ENCODE measurements at regions of chr11 and their contacts with region 1.

Region 1: GRCh38 chr11:66677599-66678375 is at the start of gene RBM4B:
- DNase-seq: peak; percentile 97
- ATAC-seq: peak; percentile 90
- H3K4me3 Mint-ChIP-seq: peak within 1 kb of the TSS; percentile 85
- H3K27ac Mint-ChIP-seq: peak within 1 kb of the TSS; percentile 94
- H3K4me1 Mint-ChIP-seq: peaks cover 27% of the 10 kb centered on the region
- H3K27me3 Mint-ChIP-seq: no peaks in the 10 kb centered on the region
- total RNA-seq, gene RBM4B: 14.7 to 14.8 TPM

Region 2: DNA sequence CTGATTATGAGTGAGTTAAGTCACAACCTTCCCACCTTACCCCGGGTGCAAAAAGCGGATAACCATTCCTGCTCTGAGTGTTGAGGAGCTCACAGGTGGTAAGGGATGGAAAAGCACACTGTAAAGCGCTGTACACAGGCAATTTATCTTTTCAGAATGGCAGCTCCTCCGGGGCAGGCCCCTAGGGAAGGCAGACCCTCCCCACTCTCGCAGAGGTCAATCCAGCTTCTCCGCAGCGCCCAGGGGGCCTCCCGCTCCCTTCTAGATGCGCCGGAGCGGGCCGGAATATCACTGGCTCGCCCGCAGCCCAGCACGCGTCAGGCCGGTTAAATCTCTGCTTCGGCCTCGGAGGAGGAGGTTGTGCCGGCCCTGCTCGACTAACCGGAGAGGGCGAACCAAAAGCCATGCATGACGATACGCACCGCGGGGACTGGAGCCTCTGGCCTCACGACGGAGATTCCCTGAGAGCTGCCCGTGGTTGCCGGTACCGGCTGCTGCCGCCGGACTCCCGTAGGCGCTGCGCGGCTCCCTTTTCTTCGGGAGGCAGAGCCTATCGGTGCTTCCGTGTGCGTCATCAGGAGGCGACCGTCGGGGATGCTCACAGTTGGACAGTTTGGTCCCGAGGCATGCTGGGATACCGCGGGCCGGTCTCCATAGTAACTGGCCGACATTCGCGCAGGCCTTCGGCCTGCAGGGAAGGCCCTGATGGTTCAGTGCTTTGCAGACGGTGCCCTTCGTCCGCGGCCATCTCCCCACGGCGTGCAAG is 333.1 kb before region 1 on chr11 and contains the start of gene BRMS1:
- CTCF ChIA-PET with region 1: no interaction called
- POLR2A ChIA-PET with region 1: no interaction called
- intact Hi-C with region 1: loop called in 1 of 2 experiments (anchors 5 kb)
- DNase-seq: peak; percentile 98
- ATAC-seq: peak; percentile 80
- H3K4me3 Mint-ChIP-seq: peak within 1 kb of the TSS; percentile 93
- H3K27ac Mint-ChIP-seq: peak within 1 kb of the TSS; percentile 90
- H3K4me1 Mint-ChIP-seq: peaks cover 45% of the 10 kb centered on the region
- H3K27me3 Mint-ChIP-seq: peaks cover 3% of the 10 kb centered on the region
- total RNA-seq, gene BRMS1: 29.2 to 30.2 TPM

Region 3: GRCh38 chr11:66438504-66439466 is 239.0 kb before region 1 on chr11 and contains the start of gene MRPL11:
- CTCF ChIA-PET with region 1: interaction called, 10 read pairs
- POLR2A ChIA-PET with region 1: interaction called, 4 read pairs
- intact Hi-C with region 1: loop called (anchors 1 to 10 kb)
- DNase-seq: peak; percentile 94
- ATAC-seq: peak; percentile 99
- H3K4me3 Mint-ChIP-seq: peak within 1 kb of the TSS; percentile 85
- H3K27ac Mint-ChIP-seq: peak within 1 kb of the TSS; percentile 98
- H3K4me1 Mint-ChIP-seq: peaks cover 8% of the 10 kb centered on the region
- H3K27me3 Mint-ChIP-seq: no peaks in the 10 kb centered on the region
- total RNA-seq, gene MRPL11: 115 to 120 TPM

Region 4: DNA sequence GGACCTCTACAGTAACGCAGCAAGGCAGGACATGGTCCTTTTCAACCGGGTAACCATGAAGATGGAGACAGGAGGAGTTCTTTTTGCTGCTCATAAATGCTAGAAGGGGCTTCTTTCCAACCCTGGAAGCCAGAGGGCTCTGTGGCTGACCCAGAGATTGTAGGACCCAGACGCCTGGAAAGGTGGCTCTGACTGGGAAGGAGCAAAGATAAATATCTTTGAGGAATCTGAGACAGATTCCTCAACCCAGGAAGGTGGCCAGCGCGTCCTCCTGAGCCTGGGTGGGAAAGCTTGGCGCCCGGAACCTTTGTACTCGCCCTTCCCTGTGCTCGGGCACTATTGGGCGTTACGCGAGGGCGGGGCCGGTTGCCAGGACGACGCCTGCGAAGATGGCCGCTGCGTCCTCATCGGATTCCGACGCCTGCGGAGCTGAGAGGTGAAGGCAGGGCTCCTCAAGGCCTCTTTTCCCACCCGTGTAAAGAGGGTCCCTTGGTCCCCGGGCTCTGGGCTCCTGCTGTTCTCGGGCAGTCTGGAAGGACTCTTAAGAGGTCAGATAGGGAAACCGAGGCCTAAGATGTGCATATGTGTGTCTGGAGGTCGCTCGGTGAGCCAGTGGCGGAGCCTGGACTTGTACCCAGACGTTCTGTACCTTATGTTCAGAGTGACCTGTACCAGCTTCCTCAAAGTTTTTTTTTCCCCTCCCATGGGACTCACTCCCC is 167.4 kb before region 1 on chr11 and contains the start of gene BBS1:
- CTCF ChIA-PET with region 1: interaction called, 8 read pairs
- POLR2A ChIA-PET with region 1: interaction called, 4 read pairs
- intact Hi-C with region 1: loop called in 1 of 2 experiments (anchors 1 kb)
- DNase-seq: peak; percentile 88
- ATAC-seq: peak; percentile 98
- H3K4me3 Mint-ChIP-seq: peak within 1 kb of the TSS; percentile 86
- H3K27ac Mint-ChIP-seq: peak within 1 kb of the TSS; percentile 48
- H3K4me1 Mint-ChIP-seq: peaks cover 10% of the 10 kb centered on the region
- H3K27me3 Mint-ChIP-seq: no peaks in the 10 kb centered on the region
- total RNA-seq, gene BBS1: 9.4 to 10.7 TPM

Region 5: DNA sequence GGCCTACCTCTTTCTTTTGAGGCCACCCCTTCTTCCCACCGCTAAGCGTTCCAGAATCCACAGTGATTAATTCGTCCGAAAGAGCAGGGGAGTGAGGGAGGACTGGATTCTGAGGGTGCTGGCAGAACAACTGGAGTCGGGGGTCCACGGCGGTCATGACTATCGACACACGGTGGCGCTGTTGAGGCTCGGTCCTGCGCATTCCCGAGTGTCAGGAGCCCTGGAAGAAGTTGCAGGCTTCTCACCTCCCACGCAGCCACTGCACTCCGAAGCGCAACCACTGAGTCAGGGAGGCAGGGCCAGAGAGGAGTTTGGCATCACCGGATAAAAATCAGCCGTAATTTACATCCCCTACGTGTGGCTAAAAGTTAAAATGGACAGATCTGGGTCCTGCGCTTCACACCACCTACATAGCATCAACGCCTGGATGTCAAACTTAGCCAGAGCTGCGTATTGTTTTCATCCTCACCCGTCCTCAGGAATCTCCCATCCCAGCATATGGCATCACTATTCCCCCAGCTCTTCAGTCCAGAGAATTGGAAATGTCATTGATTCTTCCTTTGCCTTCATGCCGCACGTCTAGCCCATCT is 98.7 kb before region 1 on chr11:
- CTCF ChIA-PET with region 1: interaction called, 99 read pairs
- POLR2A ChIA-PET with region 1: interaction called, 3 read pairs
- intact Hi-C with region 1: loop called (anchors 1 kb)
- DNase-seq: peak; percentile 91
- ATAC-seq: peak; percentile 90
- H3K4me3 Mint-ChIP-seq: no peak overlapping the region
- H3K27ac Mint-ChIP-seq: no peak overlapping the region
- H3K4me1 Mint-ChIP-seq: peaks cover 16% of the 10 kb centered on the region
- H3K27me3 Mint-ChIP-seq: peaks cover 2% of the 10 kb centered on the region

Region 6: GRCh38 chr11:66646828-66647227 is 31.0 kb before region 1 on chr11:
- CTCF ChIA-PET with region 1: interaction called, 21 read pairs
- POLR2A ChIA-PET with region 1: interaction called, 6 read pairs
- intact Hi-C with region 1: no loop called
- DNase-seq: no peak
- ATAC-seq: no peak
- H3K4me3 Mint-ChIP-seq: no peak overlapping the region
- H3K27ac Mint-ChIP-seq: peak overlapping the region; percentile 62
- H3K4me1 Mint-ChIP-seq: peaks cover 75% of the 10 kb centered on the region
- H3K27me3 Mint-ChIP-seq: no peaks in the 10 kb centered on the region

Region 7: DNA sequence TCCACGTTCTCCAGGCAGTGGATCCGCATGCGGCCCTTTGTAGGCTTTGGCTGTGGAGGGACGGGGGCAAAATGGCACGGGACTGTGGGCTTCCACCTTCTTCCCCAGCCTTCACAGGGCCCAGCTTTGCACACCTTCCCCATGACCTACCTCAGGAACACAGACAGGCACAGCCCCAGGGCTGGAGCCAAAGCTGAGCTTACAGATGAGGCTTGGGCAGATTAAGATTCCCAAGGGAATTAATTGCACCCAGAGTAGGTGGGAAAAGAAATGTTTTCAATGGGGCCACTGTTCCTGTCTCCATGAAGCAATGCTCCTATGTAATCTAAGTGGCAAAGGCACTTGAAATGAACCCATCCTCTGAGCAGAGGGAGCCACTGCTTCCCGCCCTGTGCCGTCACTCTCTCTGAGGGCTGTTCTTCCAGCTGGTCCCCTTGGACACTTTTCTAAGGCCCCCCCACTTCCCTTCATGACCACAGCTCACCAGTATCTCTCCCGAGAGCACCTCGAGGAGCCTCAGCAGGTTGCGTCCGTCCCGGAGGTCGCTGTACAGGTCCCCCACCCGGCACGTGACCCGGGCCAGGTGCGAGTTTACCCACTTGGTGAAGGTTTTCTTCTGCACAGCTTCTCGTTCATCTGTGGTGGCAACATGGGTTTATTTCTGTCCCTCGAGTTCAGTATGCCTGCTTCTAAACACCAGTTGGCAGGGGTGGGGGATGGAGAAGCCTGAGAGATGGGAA is 37.7 kb after region 1 on chr11:
- CTCF ChIA-PET with region 1: no interaction called
- POLR2A ChIA-PET with region 1: no interaction called
- intact Hi-C with region 1: no loop called
- DNase-seq: no peak
- ATAC-seq: no peak
- H3K4me3 Mint-ChIP-seq: no peak overlapping the region
- H3K27ac Mint-ChIP-seq: no peak overlapping the region
- H3K4me1 Mint-ChIP-seq: peaks cover 9% of the 10 kb centered on the region
- H3K27me3 Mint-ChIP-seq: peaks cover 22% of the 10 kb centered on the region

Region 8: GRCh38 chr11:66958232-66958955 is 280.6 kb after region 1 on chr11 and contains the start of gene PC:
- CTCF ChIA-PET with region 1: no interaction called
- POLR2A ChIA-PET with region 1: no interaction called
- intact Hi-C with region 1: loop called in 1 of 2 experiments (anchors 1 kb)
- DNase-seq: peak; percentile 99
- ATAC-seq: peak; percentile 98
- H3K4me3 Mint-ChIP-seq: peak within 1 kb of the TSS; percentile 78
- H3K27ac Mint-ChIP-seq: peak within 1 kb of the TSS; percentile 90
- H3K4me1 Mint-ChIP-seq: peaks cover 18% of the 10 kb centered on the region
- H3K27me3 Mint-ChIP-seq: no peaks in the 10 kb centered on the region
- total RNA-seq, gene PC: 9.2 to 9.3 TPM

Measured in activated CD4-positive, alpha-beta T cell treated with anti-CD3 and anti-CD28 coated beads for 36 hours (primary cell).